ENCODE measurements at regions of chr1 and their contacts with region 1.

Region 1: GRCh38 chr1:183227963-183228649 is 42.0 kb downstream of the LAMC2 start:
- DNase-seq: peak; percentile 85
- ATAC-seq: peak; percentile 95
- H3K4me3 Mint-ChIP-seq: no peak overlapping the region
- H3K27ac Mint-ChIP-seq: no peak overlapping the region
- H3K4me1 Mint-ChIP-seq: peaks cover 26% of the 10 kb centered on the region
- H3K27me3 Mint-ChIP-seq: no peaks in the 10 kb centered on the region
- CTCF ChIP-seq: peak; percentile 60

Region 2: GRCh38 chr1:183185941-183186490 is 42.1 kb before region 1 on chr1 and contains the start of gene LAMC2:
- CTCF ChIA-PET with region 1: interaction called, 10 read pairs
- POLR2A ChIA-PET with region 1: no interaction called
- DNase-seq: peak; percentile 83
- ATAC-seq: peak; percentile 91
- H3K4me3 Mint-ChIP-seq: peak within 1 kb of the TSS; percentile 79
- H3K27ac Mint-ChIP-seq: peak within 1 kb of the TSS; percentile 94
- H3K4me1 Mint-ChIP-seq: peaks cover 10% of the 10 kb centered on the region
- H3K27me3 Mint-ChIP-seq: no peaks in the 10 kb centered on the region; the same call in 1 of the 2 replicates
- CTCF ChIP-seq: no peak
- total RNA-seq, gene LAMC2: 6.5 to 7.9 TPM (median 6.5 TPM) in 3 replicates

Region 3: DNA sequence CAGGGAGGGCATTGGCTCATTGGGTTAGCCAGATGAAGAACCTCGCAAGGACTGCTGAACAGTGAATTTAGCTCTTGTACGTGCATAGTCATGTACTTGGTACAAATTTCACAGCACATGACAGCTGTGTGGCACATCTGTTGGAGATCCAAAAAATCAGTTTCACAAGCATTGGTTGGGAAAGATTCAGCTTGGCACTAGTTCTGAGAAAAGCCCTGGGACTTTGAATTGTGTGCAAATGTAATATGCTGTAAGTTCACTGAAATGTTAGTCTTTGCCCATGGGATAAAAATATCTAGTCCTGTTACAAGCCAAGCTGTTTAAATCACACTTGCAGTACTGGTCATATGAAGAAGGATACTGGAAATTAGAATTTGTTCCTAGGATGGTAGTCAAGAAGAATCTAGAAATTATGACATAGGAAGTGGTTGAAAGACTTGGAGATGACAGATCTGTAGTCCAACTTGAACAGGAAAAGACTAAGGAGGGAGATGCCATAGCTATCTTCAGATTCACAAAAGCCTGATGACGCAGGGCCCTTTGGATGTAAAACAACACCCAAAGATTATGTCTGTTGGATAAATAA is 22.8 kb before region 1 on chr1:
- CTCF ChIA-PET with region 1: interaction called, 10 read pairs
- POLR2A ChIA-PET with region 1: interaction called, 3 read pairs
- DNase-seq: no peak
- ATAC-seq: no peak
- H3K4me3 Mint-ChIP-seq: no peak overlapping the region
- H3K27ac Mint-ChIP-seq: no peak overlapping the region
- H3K4me1 Mint-ChIP-seq: peaks cover 5% of the 10 kb centered on the region; the same call in 1 of the 2 replicates
- H3K27me3 Mint-ChIP-seq: no peaks in the 10 kb centered on the region
- CTCF ChIP-seq: no peak

Region 4: DNA sequence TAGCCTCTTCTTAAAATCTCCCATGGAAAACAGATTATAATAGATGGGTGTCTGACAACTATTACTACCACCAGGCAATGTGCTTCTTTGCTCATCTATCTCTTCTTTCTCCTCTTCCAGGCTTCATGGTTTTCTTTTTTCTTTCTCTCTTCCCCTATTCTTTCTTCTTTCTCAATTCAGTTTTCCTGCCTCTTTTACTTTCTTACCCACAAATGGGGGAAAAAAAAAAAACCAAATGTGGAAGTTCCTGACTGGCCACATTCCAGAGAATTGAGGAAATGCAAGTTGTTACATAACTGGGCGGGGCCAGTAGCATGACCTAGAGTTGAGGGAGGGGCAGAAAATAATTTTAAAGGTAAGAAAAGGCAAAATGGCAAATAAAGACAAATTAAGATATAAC is 233.2 kb after region 1 on chr1:
- CTCF ChIA-PET with region 1: no interaction called
- POLR2A ChIA-PET with region 1: no interaction called
- DNase-seq: no peak
- ATAC-seq: peak; percentile 72
- H3K4me3 Mint-ChIP-seq: peak overlapping the region; percentile 29
- H3K27ac Mint-ChIP-seq: peak overlapping the region; percentile 83
- H3K4me1 Mint-ChIP-seq: peaks cover 40% of the 10 kb centered on the region
- H3K27me3 Mint-ChIP-seq: no peaks in the 10 kb centered on the region
- CTCF ChIP-seq: no peak

Region 5: DNA sequence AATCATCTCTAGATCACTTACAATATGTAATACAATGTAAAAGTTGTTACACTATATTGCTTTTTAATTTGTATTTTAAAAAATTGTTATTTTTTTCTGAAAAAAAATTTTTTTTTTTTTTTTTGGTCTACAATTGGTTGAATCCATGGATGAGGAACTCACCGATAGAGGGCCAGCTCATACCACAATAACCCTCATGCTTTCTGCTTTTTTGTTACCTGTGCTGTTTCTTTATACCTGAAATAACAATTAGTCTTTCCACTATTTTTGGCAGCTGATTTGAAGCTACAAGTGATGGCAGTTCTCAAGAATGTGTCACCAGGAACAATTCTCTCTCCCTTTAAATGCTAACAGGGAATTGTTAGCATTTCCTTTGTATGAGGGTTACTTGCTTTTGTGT is 256.1 kb after region 1 on chr1:
- CTCF ChIA-PET with region 1: no interaction called
- POLR2A ChIA-PET with region 1: no interaction called
- DNase-seq: no peak
- ATAC-seq: peak; percentile 43
- H3K4me3 Mint-ChIP-seq: no peak overlapping the region
- H3K27ac Mint-ChIP-seq: no peak overlapping the region
- H3K4me1 Mint-ChIP-seq: peaks cover 46% of the 10 kb centered on the region
- H3K27me3 Mint-ChIP-seq: no peaks in the 10 kb centered on the region
- CTCF ChIP-seq: no peak

Measured in WTC11 (cell line).